Right cardiac atrium (tissue), 5 donors: ENCODE measurements at regions of chr3 and their contacts with region 1.

Region 1: DNA sequence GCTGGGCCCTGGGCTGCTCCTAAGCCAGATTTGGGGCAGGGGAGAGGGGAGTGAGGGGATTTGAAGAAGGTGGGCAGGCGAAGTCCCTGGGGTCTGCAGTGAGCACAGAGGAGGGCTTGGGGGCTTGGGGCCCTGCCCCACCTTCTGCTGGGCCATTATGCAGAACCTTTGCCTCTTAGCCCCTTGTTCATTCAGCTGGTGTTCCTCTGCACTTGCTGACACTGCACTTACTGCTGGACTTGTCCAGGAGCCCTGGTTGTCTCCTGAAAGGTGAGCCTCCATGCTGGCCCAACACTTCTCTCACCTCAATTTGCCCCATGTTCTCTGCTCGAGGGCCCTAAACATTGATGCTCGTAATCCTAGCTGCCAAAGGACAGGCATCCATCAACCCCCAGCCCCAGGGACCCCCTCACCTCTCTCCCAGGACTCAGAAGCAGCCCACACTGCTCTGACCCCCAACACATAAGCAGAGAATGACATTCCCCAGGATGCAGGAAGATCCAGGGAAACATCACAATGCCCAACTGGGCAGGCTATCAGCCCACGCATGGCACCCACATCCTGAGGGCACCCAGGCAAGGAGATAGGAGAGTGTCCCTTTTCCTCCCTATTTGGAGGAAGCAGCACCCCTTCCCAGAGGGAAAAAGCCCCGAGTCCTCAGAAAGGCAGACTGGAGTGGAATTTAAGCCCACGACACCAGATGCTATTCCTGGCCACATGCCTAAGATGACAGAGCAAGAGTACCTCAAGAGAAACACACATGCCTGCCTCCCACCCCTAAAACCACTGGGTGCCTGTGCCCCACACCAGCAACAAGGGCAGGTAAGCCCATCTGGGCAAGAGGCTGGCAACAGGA is 76.8 kb downstream of the ADCY5 start:
- DNase-seq: no peak
- ATAC-seq: no peak
- H3K4me3 ChIP-seq: no peak overlapping the region
- H3K27ac ChIP-seq: peak overlapping the region; percentile 97
- H3K4me1 ChIP-seq: peaks cover 25% of the 10 kb centered on the region
- H3K27me3 ChIP-seq: no peaks in the 10 kb centered on the region

Region 2: DNA sequence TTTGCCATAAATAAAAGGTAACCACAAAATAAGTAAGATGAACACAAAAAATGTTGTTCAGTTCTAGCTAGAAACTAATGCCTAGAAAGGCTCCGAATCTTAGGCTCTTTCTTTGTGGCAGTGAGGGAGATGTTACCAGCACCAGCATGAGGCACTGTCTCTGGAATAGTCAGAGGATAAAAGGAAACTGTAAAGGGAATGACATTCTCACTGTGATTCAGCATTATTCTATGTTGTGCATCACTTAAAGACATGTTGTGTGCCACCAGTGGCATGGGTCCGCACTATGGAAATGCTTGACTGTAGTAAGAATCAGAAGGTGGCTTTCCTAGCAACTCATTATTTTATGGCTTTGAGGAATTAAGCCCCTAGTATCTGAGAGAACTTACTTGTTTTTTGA is 99.5 kb before region 1 on chr3:
- intact Hi-C with region 1: no loop called
- DNase-seq: no peak
- ATAC-seq: no peak
- H3K4me3 ChIP-seq: no peak overlapping the region
- H3K27ac ChIP-seq: no peak overlapping the region
- H3K4me1 ChIP-seq: peaks cover 4% of the 10 kb centered on the region
- H3K27me3 ChIP-seq: no peaks in the 10 kb centered on the region

Region 3: GRCh38 chr3:123335007-123335670 is 36.9 kb before region 1 on chr3:
- intact Hi-C with region 1: loop called in 1 of 4 experiments (anchors 5 kb)
- DNase-seq: peak in 1 of 3 donors; percentile 37
- ATAC-seq: no peak
- H3K4me3 ChIP-seq: no peak overlapping the region
- H3K27ac ChIP-seq: peak overlapping the region; percentile 79
- H3K4me1 ChIP-seq: peaks cover 10% of the 10 kb centered on the region
- H3K27me3 ChIP-seq: no peaks in the 10 kb centered on the region